HepG2 (cell line): ENCODE measurements at regions of chr10 and their contacts with region 1.

Region 1: DNA sequence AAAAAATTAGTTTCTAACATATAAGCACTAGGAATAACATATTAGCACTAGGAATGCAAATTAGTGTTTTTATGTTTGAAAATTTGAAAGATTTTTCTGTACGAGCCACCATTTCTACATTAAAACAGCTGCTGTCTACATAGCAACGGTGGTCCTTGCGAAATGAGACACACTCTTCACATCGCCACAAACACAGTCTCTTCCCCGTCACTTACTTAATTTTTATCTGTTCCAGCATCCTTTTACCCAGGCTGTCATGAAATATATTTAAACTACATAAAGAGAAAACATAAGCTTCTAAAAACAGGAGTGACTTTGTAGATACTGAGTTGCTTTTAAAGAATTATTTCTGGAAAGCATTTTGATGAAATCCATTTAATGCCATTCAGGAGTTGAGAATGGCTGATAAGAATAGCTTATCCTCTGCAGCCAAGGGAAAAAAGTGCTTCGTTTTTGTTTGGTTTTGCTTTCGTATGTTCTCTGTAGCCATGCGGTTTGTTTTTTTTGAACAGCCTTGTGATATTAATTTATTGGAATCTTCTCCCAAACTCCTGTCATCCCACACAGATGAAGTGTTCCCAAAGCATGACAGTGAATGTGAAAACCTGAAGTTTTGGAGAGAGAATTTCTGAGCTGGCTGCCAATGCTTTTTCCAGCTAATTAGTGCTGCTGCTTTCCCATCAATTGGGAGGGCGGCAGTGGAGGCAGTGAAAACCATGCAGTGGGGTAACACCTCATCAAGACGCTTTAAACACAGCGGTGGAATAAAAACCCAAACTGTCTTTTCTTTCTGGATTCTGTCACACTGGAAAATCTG is 603.7 kb upstream of the ADARB2 start:
- DNase-seq: no peak
- ATAC-seq: no peak
- H3K4me3 ChIP-seq: no peak overlapping the region
- H3K27ac ChIP-seq: no peak overlapping the region
- H3K4me1 ChIP-seq: no peaks in the 10 kb centered on the region
- H3K27me3 ChIP-seq: no peaks in the 10 kb centered on the region
- CTCF ChIP-seq: no peak
- EP300 ChIP-seq: no peak
- POLR2A ChIP-seq: no peak
- RAD21 ChIP-seq: no peak

Region 2: GRCh38 chr10:1379601-1380000 is 961.4 kb before region 1 on chr10:
- CTCF ChIA-PET with region 1: no interaction called
- POLR2A ChIA-PET with region 1: no interaction called
- in situ Hi-C with region 1: no loop called
- intact Hi-C with region 1: loop called (anchors 5 kb)
- DNase-seq: no peak
- ATAC-seq: no peak; the same call in 2 of the 3 replicates
- H3K4me3 ChIP-seq: no peak overlapping the region
- H3K27ac ChIP-seq: no peak overlapping the region
- H3K4me1 ChIP-seq: no peaks in the 10 kb centered on the region
- H3K27me3 ChIP-seq: peaks cover 2 to 50% of the 10 kb centered on the region in 2 experiments
- CTCF ChIP-seq: no peak
- EP300 ChIP-seq: no peak
- POLR2A ChIP-seq: no peak
- RAD21 ChIP-seq: no peak

Region 3: DNA sequence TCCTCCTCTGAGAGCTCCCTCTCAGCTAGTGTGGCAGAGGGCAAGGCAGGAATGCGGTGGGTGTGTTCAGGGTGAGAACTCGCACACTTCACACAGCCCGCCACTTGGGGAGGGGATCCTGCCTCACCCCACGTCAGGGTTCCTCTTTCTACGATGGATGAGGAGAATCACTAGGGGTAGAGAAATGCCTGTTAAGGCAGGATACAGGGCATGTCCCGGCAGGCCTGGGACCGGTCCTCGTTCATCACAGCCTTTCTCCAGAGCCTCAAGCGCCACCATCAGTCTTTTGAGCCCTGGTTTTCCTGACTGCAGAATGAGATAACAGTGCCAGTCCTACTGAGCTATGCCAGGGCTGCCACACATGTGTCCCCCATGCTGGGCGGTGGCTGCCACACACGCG is 57.0 kb before region 1 on chr10:
- CTCF ChIA-PET with region 1: no interaction called
- POLR2A ChIA-PET with region 1: no interaction called
- in situ Hi-C with region 1: no loop called
- intact Hi-C with region 1: no loop called
- DNase-seq: no peak
- ATAC-seq: no peak
- H3K4me3 ChIP-seq: no peak overlapping the region
- H3K27ac ChIP-seq: no peak overlapping the region
- H3K4me1 ChIP-seq: no peaks in the 10 kb centered on the region
- H3K27me3 ChIP-seq: peaks cover 0 to 13% of the 10 kb centered on the region in 2 experiments; a peak in 2 of 5 replicates
- CTCF ChIP-seq: no peak
- EP300 ChIP-seq: no peak
- POLR2A ChIP-seq: no peak
- RAD21 ChIP-seq: no peak

Region 4: GRCh38 chr10:2306081-2306480 is 35.0 kb before region 1 on chr10:
- CTCF ChIA-PET with region 1: no interaction called
- POLR2A ChIA-PET with region 1: no interaction called
- in situ Hi-C with region 1: no loop called
- intact Hi-C with region 1: no loop called
- DNase-seq: no peak
- ATAC-seq: no peak
- H3K4me3 ChIP-seq: no peak overlapping the region
- H3K27ac ChIP-seq: no peak overlapping the region
- H3K4me1 ChIP-seq: no peaks in the 10 kb centered on the region
- H3K27me3 ChIP-seq: no peaks in the 10 kb centered on the region
- CTCF ChIP-seq: no peak
- EP300 ChIP-seq: no peak
- POLR2A ChIP-seq: no peak
- RAD21 ChIP-seq: no peak

Region 5: DNA sequence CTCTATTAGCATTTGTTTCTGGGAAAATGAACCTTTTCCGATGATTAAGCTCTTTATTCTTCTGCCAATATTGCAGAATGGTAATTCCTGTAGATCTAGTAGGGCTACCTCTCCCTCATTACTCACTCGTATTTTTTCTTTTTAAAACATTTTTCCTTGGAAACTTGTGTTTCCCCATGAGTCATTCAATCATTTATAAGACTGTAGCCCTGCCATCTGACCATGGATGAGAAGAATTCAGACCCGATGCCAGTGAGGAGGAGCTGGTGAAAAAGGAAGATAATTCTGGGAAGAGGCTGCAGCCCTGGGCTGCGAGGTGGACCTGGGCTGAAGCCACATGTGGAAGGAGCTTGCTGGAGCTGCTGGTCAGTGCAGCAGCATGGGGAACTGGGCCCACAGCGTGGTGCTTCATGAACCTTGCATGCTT is 1201.2 kb after region 1 on chr10:
- CTCF ChIA-PET with region 1: no interaction called
- POLR2A ChIA-PET with region 1: no interaction called
- in situ Hi-C with region 1: no loop called
- intact Hi-C with region 1: no loop called
- DNase-seq: no peak
- ATAC-seq: no peak
- H3K4me3 ChIP-seq: no peak overlapping the region
- H3K27ac ChIP-seq: no peak overlapping the region
- H3K4me1 ChIP-seq: no peaks in the 10 kb centered on the region
- H3K27me3 ChIP-seq: peaks cover 0 to 56% of the 10 kb centered on the region in 2 experiments; a peak in 3 of 5 replicates
- CTCF ChIP-seq: no peak
- EP300 ChIP-seq: no peak
- POLR2A ChIP-seq: no peak
- RAD21 ChIP-seq: no peak